ENCODE measurements at regions of chr20 and their contacts with region 1.

Region 1: DNA sequence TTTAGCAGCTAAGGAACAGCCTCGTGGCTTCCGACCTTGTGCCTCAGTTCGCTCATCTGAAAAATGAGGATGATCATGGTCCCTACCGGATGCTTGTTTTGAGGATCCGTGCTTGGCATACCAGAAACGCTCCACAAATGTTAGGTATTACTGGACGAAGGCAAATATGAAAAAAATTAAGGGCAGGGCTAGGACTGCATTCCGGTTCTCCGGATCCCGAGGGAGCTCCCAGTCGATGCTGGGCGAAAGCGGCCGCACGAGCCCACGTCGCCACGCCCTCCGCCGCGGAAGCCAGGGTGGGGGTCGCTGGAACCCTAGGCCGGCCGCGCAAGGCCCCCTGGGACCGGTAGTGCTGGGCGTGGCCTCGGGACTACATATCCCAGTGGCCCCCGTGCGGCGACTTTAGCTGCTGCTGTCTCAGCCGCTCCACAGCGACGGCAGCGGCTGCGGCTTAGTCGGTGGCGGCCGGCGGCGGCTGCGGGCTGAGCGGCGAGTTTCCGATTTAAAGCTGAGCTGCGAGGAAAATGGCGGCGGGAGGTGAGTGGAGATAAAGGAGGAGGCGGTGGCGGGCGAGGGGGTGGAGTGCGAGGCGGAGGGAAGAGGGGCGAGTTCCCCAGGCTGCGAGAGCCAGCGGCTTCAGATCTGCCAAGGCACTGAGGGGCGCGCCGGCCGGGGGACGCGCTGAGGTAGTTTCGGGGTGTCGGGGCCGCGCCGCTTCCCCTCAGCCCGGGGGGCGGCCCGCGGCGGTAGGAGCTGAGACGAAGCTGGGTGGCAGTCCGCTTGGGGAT is at the start of gene NCOA3:
- DNase-seq: peak; percentile 92
- H3K4me3 ChIP-seq: peak within 1 kb of the TSS; percentile 85 to 98
- H3K27ac ChIP-seq: peak within 1 kb of the TSS; percentile 88 to 91
- H3K4me1 ChIP-seq: no peaks in the 10 kb centered on the region
- H3K27me3 ChIP-seq: no peaks in the 10 kb centered on the region
- CTCF ChIP-seq: peak; percentile 21 to 80 (median 59)
- POLR2A ChIP-seq: peak; percentile 92
- total RNA-seq, gene NCOA3: 21.6 to 35.6 TPM

Region 2: DNA sequence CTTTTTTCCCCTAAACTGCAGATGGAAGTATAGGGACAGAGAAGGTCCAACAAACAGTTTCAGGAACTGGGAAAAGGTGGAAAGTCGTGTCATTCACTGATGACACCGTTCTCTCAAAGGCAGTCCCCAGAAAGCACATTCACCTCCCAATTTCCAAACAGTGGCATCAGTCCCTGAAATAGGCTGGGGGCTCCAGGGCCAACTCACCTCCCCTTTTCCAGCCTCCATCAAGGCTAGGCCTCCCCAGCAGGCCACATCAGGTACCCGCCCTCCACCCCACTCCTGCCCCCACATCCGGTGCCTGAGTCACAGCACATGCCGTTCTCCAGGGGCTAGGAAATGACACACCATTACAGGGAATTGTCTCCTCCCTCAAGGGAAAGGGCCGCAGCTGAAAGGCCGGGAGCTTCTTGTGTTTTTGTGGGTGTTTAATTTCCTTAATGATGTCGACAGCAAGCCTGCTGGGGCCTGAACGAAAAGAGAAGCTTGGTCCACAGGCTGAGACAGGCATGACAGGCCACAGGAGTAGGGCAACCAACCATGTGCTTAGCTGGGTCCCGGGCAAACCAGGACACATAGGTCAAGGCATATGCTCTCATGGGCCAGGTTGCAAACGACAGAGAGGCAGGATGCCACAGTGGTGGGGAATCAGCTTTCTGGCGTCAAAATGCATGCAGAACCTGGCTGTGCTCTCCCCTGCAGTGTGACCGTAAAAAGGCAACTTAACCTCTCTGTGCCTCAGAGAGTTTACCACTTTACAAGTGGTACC is 184.4 kb before region 1 on chr20:
- intact Hi-C with region 1: no loop called
- DNase-seq: peak; percentile 86
- H3K4me3 ChIP-seq: no peak overlapping the region
- H3K27ac ChIP-seq: peak overlapping the region; percentile 91 to 96
- H3K4me1 ChIP-seq: peaks cover 42% of the 10 kb centered on the region
- H3K27me3 ChIP-seq: no peaks in the 10 kb centered on the region
- CTCF ChIP-seq: no peak
- POLR2A ChIP-seq: no peak

Region 3: GRCh38 chr20:47551841-47552240 is 50.2 kb after region 1 on chr20:
- intact Hi-C with region 1: loop called (anchors 10 kb)
- DNase-seq: no peak
- H3K4me3 ChIP-seq: no peak overlapping the region
- H3K27ac ChIP-seq: no peak overlapping the region
- H3K4me1 ChIP-seq: no peaks in the 10 kb centered on the region
- H3K27me3 ChIP-seq: no peaks in the 10 kb centered on the region
- CTCF ChIP-seq: no peak
- POLR2A ChIP-seq: no peak

Region 4: GRCh38 chr20:47586646-47587306 is 85.1 kb after region 1 on chr20:
- intact Hi-C with region 1: no loop called
- DNase-seq: no peak
- H3K4me3 ChIP-seq: no peak overlapping the region
- H3K27ac ChIP-seq: no peak overlapping the region
- H3K4me1 ChIP-seq: no peaks in the 10 kb centered on the region
- H3K27me3 ChIP-seq: no peaks in the 10 kb centered on the region
- CTCF ChIP-seq: no peak
- POLR2A ChIP-seq: no peak

Region 5: DNA sequence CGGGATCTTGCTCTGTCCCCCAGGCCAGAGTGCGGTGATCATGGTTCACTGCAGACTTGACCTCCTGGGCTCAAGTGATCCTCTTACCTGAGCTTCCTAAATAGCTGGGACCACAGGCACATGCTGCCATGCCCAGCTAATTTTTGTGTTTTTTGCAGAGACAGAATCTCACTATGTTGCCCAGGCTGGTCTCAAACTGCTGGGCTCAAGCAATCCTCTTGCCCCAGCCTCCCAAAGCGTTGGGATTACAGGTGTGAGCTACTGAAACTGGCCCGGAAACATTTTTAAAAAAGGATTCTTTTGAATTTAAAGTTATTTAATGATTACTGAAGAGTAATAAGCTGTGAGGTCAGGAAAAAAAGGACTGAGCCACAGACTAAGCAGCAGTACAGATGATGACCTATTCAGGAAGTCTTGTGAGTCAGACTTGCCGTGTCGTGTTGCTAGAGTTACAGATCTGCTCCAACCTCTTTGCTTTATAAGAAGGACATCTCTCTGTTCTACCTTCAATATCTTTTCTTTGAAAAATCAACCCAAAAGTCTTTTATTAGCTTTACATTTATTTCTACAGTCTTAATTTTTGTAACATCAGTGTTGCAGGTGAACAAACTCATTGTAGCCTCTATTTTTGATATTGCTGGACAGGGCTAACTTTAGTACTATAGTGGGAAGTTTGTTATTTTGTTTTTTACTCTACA is 108.7 kb after region 1 on chr20:
- intact Hi-C with region 1: loop called (anchors 10 kb)
- DNase-seq: no peak
- H3K4me3 ChIP-seq: no peak overlapping the region
- H3K27ac ChIP-seq: no peak overlapping the region
- H3K4me1 ChIP-seq: no peaks in the 10 kb centered on the region
- H3K27me3 ChIP-seq: no peaks in the 10 kb centered on the region
- CTCF ChIP-seq: no peak
- POLR2A ChIP-seq: no peak

Measured in prostate gland (tissue), 2 donors.